ENCODE measurements at regions of chr6 and their contacts with region 1.

Region 1: GRCh38 chr6:22145823-22146677 is 150.8 kb downstream of the PRL start:
- DNase-seq: peak; percentile 69
- H3K4me3 ChIP-seq: no peak overlapping the region
- H3K27ac ChIP-seq: no peak overlapping the region
- H3K4me1 ChIP-seq: peaks cover 36% of the 10 kb centered on the region
- H3K27me3 ChIP-seq: no peaks in the 10 kb centered on the region
- CTCF ChIP-seq: no peak
- POLR2A ChIP-seq: no peak

Region 2: GRCh38 chr6:21840428-21840827 is 305.6 kb before region 1 on chr6:
- CTCF ChIA-PET with region 1: no interaction called
- POLR2A ChIA-PET with region 1: no interaction called
- dilution Hi-C with region 1: no loop called
- intact Hi-C with region 1: loop called (anchors 1 kb)
- DNase-seq: peak; percentile 96
- H3K4me3 ChIP-seq: peak overlapping the region in 1 of 3 experiments; percentile 13
- H3K27ac ChIP-seq: peak overlapping the region; percentile 96
- H3K4me1 ChIP-seq: peaks cover 45% of the 10 kb centered on the region
- H3K27me3 ChIP-seq: no peaks in the 10 kb centered on the region
- CTCF ChIP-seq: no peak
- POLR2A ChIP-seq: peak; percentile 49

Region 3: GRCh38 chr6:21987501-21987957 is 158.5 kb before region 1 on chr6:
- CTCF ChIA-PET with region 1: no interaction called
- POLR2A ChIA-PET with region 1: no interaction called
- dilution Hi-C with region 1: no loop called
- intact Hi-C with region 1: loop called (anchors 1 kb)
- DNase-seq: peak; percentile 96
- H3K4me3 ChIP-seq: peak overlapping the region in 1 of 3 experiments; percentile 26
- H3K27ac ChIP-seq: peak overlapping the region; percentile 88
- H3K4me1 ChIP-seq: peaks cover 33% of the 10 kb centered on the region
- H3K27me3 ChIP-seq: no peaks in the 10 kb centered on the region
- CTCF ChIP-seq: no peak
- POLR2A ChIP-seq: peak; percentile 21

Region 4: GRCh38 chr6:22157233-22157632 is 11.2 kb after region 1 on chr6:
- CTCF ChIA-PET with region 1: interaction called, 15 read pairs
- POLR2A ChIA-PET with region 1: no interaction called
- dilution Hi-C with region 1: no loop called
- intact Hi-C with region 1: no loop called
- DNase-seq: no peak
- H3K4me3 ChIP-seq: no peak overlapping the region
- H3K27ac ChIP-seq: no peak overlapping the region
- H3K4me1 ChIP-seq: no peaks in the 10 kb centered on the region
- H3K27me3 ChIP-seq: no peaks in the 10 kb centered on the region
- CTCF ChIP-seq: no peak
- POLR2A ChIP-seq: no peak

Region 5: GRCh38 chr6:22448291-22448711 is 302.3 kb after region 1 on chr6:
- CTCF ChIA-PET with region 1: no interaction called
- POLR2A ChIA-PET with region 1: no interaction called
- dilution Hi-C with region 1: no loop called
- intact Hi-C with region 1: loop called (anchors 2 kb)
- DNase-seq: peak; percentile 98
- H3K4me3 ChIP-seq: no peak overlapping the region
- H3K27ac ChIP-seq: peak overlapping the region; percentile 85
- H3K4me1 ChIP-seq: peaks cover 49% of the 10 kb centered on the region
- H3K27me3 ChIP-seq: no peaks in the 10 kb centered on the region
- CTCF ChIP-seq: no peak
- POLR2A ChIP-seq: no peak

Region 6: DNA sequence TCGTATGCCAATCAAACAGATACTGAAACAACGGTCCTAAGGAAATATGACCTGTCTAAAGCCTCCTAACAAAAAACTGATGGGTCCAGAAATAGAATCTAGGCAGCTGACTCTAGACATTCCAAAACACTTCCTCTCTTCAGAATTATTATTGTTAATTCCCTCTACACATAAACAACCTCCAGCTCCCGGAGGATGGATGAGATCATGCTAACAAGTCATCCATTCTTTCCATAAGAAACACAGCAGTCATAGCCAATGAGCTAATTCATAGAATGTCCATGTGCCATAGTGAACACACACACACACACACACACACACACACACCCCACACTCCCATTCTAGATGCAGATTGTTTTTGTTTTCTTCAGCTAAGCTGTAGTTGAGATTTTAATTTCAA is 467.6 kb after region 1 on chr6:
- CTCF ChIA-PET with region 1: no interaction called
- POLR2A ChIA-PET with region 1: no interaction called
- dilution Hi-C with region 1: no loop called
- intact Hi-C with region 1: loop called (anchors 10 kb)
- DNase-seq: peak; percentile 96
- H3K4me3 ChIP-seq: no peak overlapping the region
- H3K27ac ChIP-seq: peak overlapping the region; percentile 53
- H3K4me1 ChIP-seq: peaks cover 12% of the 10 kb centered on the region
- H3K27me3 ChIP-seq: no peaks in the 10 kb centered on the region
- CTCF ChIP-seq: no peak
- POLR2A ChIP-seq: no peak

Measured in endothelial cell of umbilical vein (primary cell).